Breast epithelium (tissue), 4 donors: ENCODE measurements at regions of chr3 and their contacts with region 1.

Region 1: DNA sequence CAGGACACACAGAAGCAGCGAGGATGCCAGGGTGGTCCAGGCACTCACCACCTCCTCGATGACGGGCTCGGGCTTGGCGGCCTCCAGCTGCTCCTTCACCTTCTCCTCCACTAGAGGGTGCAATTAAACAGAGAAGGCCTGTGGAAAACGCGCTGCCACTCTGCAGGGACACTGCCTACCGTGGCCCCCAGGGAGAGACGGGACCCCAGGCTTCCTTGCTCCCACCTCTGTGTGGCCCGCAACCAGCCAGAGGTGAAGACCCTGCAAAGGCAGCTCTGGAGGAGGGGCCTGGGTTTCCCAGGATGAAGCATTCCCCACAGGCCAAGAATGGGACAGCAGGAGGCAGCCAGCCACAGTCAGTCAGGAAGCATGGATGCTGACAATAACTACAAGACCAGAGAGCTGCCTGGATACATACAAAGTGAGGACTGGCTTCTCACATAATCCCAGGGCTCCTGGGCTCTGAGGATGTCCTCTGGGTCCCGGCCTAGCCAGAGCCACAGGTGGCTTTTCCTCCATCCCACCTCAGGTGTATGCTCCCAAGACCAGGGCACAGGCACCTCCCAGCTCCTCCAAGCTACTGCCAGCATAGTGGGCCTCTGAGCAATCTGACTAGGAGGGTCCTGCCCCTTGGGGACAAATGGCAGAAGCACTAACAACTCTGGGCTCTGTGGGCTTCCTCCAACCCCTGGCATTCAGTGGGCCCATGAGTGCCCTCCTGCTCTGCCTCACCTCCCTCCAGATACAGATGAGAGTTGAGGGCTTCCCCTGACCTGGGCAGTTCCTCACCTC is 46.2 kb downstream of the PTH1R start:
- DNase-seq: no peak
- H3K4me3 ChIP-seq: no peak overlapping the region
- H3K27ac ChIP-seq: no peak overlapping the region
- H3K4me1 ChIP-seq: peaks cover 0 to 21% of the 10 kb centered on the region in 2 donors
- H3K27me3 ChIP-seq: no peaks in the 10 kb centered on the region
- CTCF ChIP-seq: peak; percentile 24 to 77 (median 54)
- POLR2A ChIP-seq: no peak

Region 2: DNA sequence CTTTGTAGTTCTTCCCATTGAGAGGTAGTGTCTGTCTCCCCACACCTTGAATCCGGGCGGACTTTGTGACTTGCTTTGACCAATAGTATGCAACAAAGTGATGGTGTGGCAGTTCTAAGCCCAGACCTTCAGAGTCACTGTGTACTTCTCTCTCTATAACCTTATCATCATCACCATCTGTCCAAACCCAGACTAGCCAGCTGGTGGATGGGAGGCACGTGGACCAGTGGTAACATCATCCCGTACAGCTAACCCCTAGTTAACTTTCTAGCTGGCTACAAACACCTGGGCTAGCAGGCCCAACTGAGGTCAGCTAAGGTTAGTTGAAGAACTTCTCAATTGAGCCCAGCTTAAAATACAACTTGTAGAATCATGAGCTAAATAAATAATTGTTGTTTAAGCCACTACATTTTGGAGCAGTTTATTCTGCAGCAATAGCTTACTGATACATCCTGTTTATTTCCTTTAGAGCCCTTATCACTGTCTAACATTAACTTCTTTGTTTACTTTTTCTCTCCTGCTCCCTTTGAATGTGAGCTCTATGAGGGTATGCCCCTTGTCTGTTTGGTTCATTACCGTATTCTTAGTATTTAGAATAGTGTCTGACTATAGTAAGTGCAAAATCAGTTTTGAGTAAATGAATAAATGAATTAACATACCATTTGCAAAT is 1048.9 kb before region 1 on chr3:
- intact Hi-C with region 1: loop called (anchors 5 kb)
- DNase-seq: no peak
- H3K4me3 ChIP-seq: no peak overlapping the region
- H3K27ac ChIP-seq: no peak overlapping the region
- H3K4me1 ChIP-seq: no peaks in the 10 kb centered on the region
- H3K27me3 ChIP-seq: no peaks in the 10 kb centered on the region
- CTCF ChIP-seq: no peak
- POLR2A ChIP-seq: no peak

Region 3: DNA sequence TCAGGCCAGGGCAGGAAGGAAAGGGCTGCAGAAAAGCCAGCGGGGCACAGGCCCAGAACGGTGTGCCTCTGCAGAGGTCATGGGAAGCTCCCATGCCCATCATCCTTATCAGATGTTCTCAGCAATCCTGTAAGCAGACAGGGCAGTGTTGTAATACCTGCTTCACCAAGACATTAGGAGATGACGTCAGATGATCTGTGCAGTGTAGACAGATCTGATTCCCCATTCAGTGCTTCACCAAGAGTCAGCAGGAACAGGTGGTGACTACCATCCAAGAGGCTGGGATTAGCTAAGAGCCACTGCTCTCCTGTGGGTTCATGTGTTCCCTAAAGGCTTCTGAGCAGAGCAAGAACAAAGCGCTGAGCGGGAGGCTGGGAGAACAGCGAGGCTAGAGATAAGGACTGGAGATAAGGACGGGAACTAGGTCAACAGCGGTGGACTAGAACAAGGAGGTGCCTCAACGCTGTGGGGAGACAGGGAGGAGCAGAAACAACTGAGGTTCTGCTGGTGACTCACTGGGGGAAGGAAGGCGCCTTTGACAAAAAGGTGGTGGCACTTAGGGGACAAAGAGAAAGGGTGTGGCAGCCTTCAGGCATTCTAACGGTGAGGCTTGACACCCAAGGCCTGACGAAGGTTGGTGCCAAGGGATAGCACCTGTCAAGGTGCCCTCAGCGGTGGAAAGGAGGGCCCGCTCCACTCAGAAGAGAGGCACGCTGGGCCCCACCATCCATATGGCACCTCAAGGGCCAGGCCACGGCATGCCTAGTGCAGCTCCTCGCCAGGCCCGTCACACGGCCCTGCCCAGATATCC is 24.4 kb after region 1 on chr3:
- intact Hi-C with region 1: no loop called
- DNase-seq: no peak
- H3K4me3 ChIP-seq: no peak overlapping the region
- H3K27ac ChIP-seq: peak overlapping the region; percentile 69 to 75
- H3K4me1 ChIP-seq: peaks cover 0 to 31% of the 10 kb centered on the region in 2 donors
- H3K27me3 ChIP-seq: no peaks in the 10 kb centered on the region
- CTCF ChIP-seq: no peak
- POLR2A ChIP-seq: no peak